ENCODE measurements at regions of chr5 and their contacts with region 1.

Region 1: GRCh38 chr5:88729084-88729828 is 153.7 kb downstream of the MEF2C start:
- DNase-seq: peak; percentile 4 to 52 (median 40)
- H3K4me3 ChIP-seq: no peak overlapping the region
- H3K4me3 Mint-ChIP-seq: no peak overlapping the region
- H3K27ac ChIP-seq: no peak overlapping the region
- H3K27ac Mint-ChIP-seq: no peak overlapping the region
- H3K4me1 ChIP-seq: no peaks in the 10 kb centered on the region
- H3K4me1 Mint-ChIP-seq: peaks cover 3 to 4% (median 4%) of the 10 kb centered on the region in 3 donors
- H3K27me3 ChIP-seq: no peaks in the 10 kb centered on the region
- H3K27me3 Mint-ChIP-seq: peaks cover 0 to 22% of the 10 kb centered on the region in 2 donors

Region 2: GRCh38 chr5:88268385-88269184 is 460.7 kb before region 1 on chr5 and contains the start of gene TMEM161B:
- CTCF ChIA-PET with region 1: no interaction called
- POLR2A ChIA-PET with region 1: no interaction called
- DNase-seq: peak; percentile 94 to 97 (median 96)
- H3K4me3 ChIP-seq: peak within 1 kb of the TSS; percentile 100
- H3K4me3 Mint-ChIP-seq: peak within 1 kb of the TSS; percentile 95 to 100 (median 100)
- H3K27ac ChIP-seq: peak within 1 kb of the TSS; percentile 90
- H3K27ac Mint-ChIP-seq: peak within 1 kb of the TSS; percentile 86 to 100 (median 99)
- H3K4me1 ChIP-seq: peaks cover 34% of the 10 kb centered on the region
- H3K4me1 Mint-ChIP-seq: peaks cover 54 to 83% (median 70%) of the 10 kb centered on the region in 3 donors
- H3K27me3 ChIP-seq: no peaks in the 10 kb centered on the region
- H3K27me3 Mint-ChIP-seq: no peaks in the 10 kb centered on the region
- total RNA-seq, gene TMEM161B: 20.5 to 23.6 TPM

Region 3: GRCh38 chr5:88707216-88707965 is 21.9 kb before region 1 on chr5:
- CTCF ChIA-PET with region 1: interaction called, 11 read pairs
- POLR2A ChIA-PET with region 1: no interaction called
- DNase-seq: no peak
- H3K4me3 ChIP-seq: no peak overlapping the region
- H3K4me3 Mint-ChIP-seq: no peak overlapping the region
- H3K27ac ChIP-seq: no peak overlapping the region
- H3K27ac Mint-ChIP-seq: no peak overlapping the region
- H3K4me1 ChIP-seq: no peaks in the 10 kb centered on the region
- H3K4me1 Mint-ChIP-seq: no peaks in the 10 kb centered on the region
- H3K27me3 ChIP-seq: no peaks in the 10 kb centered on the region
- H3K27me3 Mint-ChIP-seq: peaks cover 4 to 36% of the 10 kb centered on the region in 2 donors

Region 4: DNA sequence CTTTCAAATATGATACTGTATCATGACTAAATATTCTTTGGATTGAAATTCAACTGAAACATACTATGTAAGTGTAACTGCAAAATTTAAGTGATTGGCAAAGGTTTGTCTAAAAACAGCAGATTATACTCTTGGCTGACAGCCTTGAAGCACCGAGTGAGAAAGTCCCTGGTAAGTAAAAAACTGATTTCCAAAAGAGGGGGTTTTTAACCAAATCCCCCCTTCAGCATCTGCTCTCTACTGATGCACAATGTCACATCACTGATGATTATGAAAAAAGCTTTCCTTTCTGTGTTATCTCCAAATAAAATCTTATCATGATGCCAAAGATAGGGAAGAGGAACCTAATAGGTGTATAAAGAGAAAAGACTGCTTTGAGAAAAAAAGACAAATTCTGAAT is 12.7 kb after region 1 on chr5:
- CTCF ChIA-PET with region 1: interaction called, 22 read pairs
- POLR2A ChIA-PET with region 1: no interaction called
- DNase-seq: no peak
- H3K4me3 ChIP-seq: no peak overlapping the region
- H3K4me3 Mint-ChIP-seq: no peak overlapping the region
- H3K27ac ChIP-seq: no peak overlapping the region
- H3K27ac Mint-ChIP-seq: no peak overlapping the region
- H3K4me1 ChIP-seq: no peaks in the 10 kb centered on the region
- H3K4me1 Mint-ChIP-seq: no peaks in the 10 kb centered on the region
- H3K27me3 ChIP-seq: no peaks in the 10 kb centered on the region
- H3K27me3 Mint-ChIP-seq: peaks cover 2 to 13% of the 10 kb centered on the region in 2 donors